Panc1 (cell line): ENCODE measurements at regions of chr18 and their contacts with region 1.

Region 1: GRCh38 chr18:21777814-21778213 is 37.2 kb downstream of the MIB1 start:
- DNase-seq: no peak
- ATAC-seq: no peak
- H3K4me3 ChIP-seq: no peak overlapping the region
- H3K27ac ChIP-seq: no peak overlapping the region
- H3K4me1 ChIP-seq: no peaks in the 10 kb centered on the region
- H3K27me3 ChIP-seq: no peaks in the 10 kb centered on the region
- CTCF ChIP-seq: no peak

Region 2: GRCh38 chr18:21798126-21798525 is 20.3 kb after region 1 on chr18:
- CTCF ChIA-PET with region 1: no interaction called
- POLR2A ChIA-PET with region 1: interaction called, 10 read pairs
- in situ Hi-C with region 1: no loop called
- intact Hi-C with region 1: no loop called
- DNase-seq: no peak
- ATAC-seq: no peak
- H3K4me3 ChIP-seq: no peak overlapping the region
- H3K27ac ChIP-seq: no peak overlapping the region
- H3K4me1 ChIP-seq: no peaks in the 10 kb centered on the region
- H3K27me3 ChIP-seq: no peaks in the 10 kb centered on the region
- CTCF ChIP-seq: no peak